Naive thymus-derived CD8-positive, alpha-beta T cell (primary cell): ENCODE measurements at regions of chr19 and their contacts with region 1.

Region 1: GRCh38 chr19:13784731-13785452 is 10.4 kb upstream of the ZSWIM4 start:
- DNase-seq: peak; percentile 50 to 84 (median 68)
- ATAC-seq: peak; percentile 65 to 75
- H3K4me3 Mint-ChIP-seq: peak overlapping the region; percentile 43 to 79 (median 69)
- H3K27ac Mint-ChIP-seq: peak overlapping the region; percentile 71 to 92 (median 85)
- H3K4me1 Mint-ChIP-seq: peaks cover 13 to 43% (median 33%) of the 10 kb centered on the region in 4 donors
- H3K27me3 Mint-ChIP-seq: no peaks in the 10 kb centered on the region

Region 2: DNA sequence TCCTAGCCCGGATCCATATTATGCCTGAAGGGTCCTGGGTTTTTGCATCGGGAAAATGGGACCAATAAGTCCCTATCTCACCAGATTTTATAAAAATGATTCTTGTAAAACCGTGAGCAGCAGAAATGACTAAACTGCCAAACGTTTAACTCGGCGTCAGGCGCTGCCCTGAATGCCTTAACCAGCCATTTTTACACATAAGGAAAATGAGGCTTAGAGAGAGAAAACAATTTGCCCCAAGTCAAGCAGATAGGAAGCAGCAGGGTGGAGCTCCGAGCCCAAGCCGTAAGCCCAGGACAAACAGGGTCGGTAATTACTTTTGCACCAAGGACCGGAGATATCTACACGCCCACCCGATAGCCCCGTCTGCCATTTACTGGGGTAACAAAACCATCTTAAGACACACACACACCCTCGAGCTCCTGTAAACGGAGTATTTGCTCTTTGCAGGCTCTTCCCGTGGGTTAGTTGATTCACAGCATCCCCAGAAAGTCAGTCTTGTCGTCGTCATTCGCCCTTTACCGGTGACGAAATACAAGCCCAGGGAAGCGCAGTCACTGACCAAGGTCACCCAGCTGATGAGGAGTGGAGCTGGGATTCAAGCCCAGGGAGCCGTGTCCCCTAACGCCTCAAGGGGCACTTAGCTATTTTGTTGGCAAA is 36.6 kb before region 1 on chr19:
- POLR2A ChIA-PET with region 1: interaction called, 14 read pairs
- DNase-seq: peak in 1 of 10 donors; percentile 28
- ATAC-seq: peak; percentile 13 to 28
- H3K4me3 Mint-ChIP-seq: peak overlapping the region; percentile 86 to 92 (median 90)
- H3K27ac Mint-ChIP-seq: peak overlapping the region; percentile 84 to 98 (median 94)
- H3K4me1 Mint-ChIP-seq: peaks cover 10 to 44% (median 30%) of the 10 kb centered on the region in 4 donors
- H3K27me3 Mint-ChIP-seq: no peaks in the 10 kb centered on the region

Region 3: GRCh38 chr19:13774217-13775191 is 10.4 kb before region 1 on chr19 and contains the start of gene C19orf53:
- POLR2A ChIA-PET with region 1: interaction called, 21 read pairs
- DNase-seq: peak; percentile 73 to 93 (median 84)
- ATAC-seq: peak; percentile 89 to 91
- H3K4me3 Mint-ChIP-seq: peak within 1 kb of the TSS; percentile 98 to 100 (median 100)
- H3K27ac Mint-ChIP-seq: peak within 1 kb of the TSS; percentile 96 to 100 (median 99)
- H3K4me1 Mint-ChIP-seq: peaks cover 18 to 44% (median 30%) of the 10 kb centered on the region in 4 donors
- H3K27me3 Mint-ChIP-seq: no peaks in the 10 kb centered on the region
- polyA plus RNA-seq, gene C19orf53: 248 to 324 (median 278) TPM

Region 4: DNA sequence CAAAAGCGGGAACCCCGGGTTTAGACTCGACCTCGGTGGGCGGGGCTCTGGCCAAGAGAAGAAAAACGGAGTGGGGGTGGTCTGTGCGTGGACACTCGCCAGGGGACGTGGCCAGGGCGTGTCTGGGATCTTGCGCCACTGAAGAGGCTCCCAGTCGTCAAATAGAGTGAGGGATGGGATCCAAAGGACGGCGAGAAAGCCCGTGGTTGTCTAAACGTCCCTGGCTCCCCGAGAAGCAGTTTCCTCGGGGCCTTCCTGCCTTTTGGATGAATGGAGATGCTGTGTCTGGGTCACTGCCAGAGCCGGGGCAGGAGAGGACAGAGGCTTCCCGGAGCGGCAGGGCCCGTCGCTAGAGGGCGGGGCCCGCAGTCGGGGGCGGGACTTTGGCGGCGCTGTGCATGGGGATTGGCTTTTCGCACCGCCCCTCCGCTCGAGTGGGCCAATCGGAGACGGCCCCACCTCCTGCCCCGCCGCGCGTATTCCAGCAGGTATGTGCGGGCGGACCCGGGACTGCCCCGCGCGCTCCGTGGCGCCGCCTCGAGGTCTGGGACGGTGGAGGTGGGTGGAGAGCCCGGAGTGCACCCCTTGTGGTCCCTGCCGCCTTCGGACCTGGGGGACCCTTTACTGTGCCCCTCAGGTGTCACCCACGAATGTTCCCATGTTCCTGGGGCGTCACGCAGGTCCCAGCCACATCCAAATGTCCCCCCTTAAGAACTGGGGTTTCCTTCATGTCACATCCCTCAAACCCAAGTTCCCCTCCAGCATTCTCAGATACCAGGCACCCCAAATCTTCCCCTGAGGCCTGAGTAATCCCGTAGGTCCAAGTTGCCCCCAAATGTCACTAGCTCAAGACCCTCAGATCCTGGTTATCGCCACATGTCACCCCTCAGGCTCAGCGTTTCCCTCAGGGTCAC is 48.7 kb after region 1 on chr19:
- POLR2A ChIA-PET with region 1: interaction called, 110 read pairs
- DNase-seq: peak; percentile 84 to 95 (median 92)
- ATAC-seq: peak; percentile 69 to 78
- H3K4me3 Mint-ChIP-seq: peak overlapping the region; percentile 82 to 94 (median 88)
- H3K27ac Mint-ChIP-seq: peak overlapping the region; percentile 84 to 99 (median 94)
- H3K4me1 Mint-ChIP-seq: peaks cover 19 to 50% (median 42%) of the 10 kb centered on the region in 4 donors
- H3K27me3 Mint-ChIP-seq: no peaks in the 10 kb centered on the region

Region 5: GRCh38 chr19:13846557-13847406 is 61.9 kb after region 1 on chr19:
- POLR2A ChIA-PET with region 1: interaction called, 110 read pairs
- DNase-seq: peak; percentile 88 to 100 (median 98)
- ATAC-seq: peak; percentile 62 to 75
- H3K4me3 Mint-ChIP-seq: peak overlapping the region; percentile 84 to 94 (median 91)
- H3K27ac Mint-ChIP-seq: peak overlapping the region; percentile 99 to 100 (median 100)
- H3K4me1 Mint-ChIP-seq: peaks cover 26 to 72% (median 56%) of the 10 kb centered on the region in 4 donors
- H3K27me3 Mint-ChIP-seq: peaks cover 0 to 4% (median 0%) of the 10 kb centered on the region in 5 donors

Region 6: DNA sequence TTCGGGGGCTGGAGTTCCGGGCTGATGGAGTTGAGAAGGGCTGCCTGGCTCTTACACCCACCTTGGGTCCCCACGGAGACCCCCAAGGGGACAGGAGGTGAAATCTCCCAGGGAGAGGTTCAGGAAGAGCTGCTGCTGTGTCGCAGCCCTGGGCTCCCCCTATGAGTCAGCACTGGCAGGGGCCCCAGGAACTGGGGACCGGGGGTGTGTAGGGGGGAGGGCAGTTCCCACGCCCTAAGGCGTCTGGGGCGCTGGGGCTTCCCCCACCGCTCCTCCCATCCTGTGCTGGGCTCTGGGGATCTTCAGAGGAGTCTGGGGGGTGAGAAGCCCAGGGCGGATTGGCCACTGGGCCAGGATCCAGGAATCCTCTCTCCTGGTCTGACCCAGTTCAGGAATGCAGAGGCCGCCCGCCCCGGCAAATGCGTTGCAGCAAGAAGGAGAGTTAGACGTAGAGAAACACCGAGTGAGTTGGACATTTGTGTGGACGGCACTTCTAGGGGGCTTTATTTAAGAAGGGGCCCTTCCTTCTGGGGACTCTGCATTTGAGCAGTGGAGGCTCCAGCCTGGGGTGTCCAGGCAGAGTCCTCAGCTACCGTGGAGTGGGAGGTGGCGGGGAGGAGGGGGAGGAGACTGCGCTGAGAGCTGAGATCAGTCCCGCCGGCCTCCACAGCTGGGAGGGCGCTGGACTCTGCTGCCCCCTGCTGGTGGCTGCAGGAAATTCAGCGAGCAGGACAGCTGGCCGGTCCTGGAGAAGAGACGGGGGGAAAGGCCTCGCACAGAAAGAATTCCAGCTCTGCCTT is 77.0 kb after region 1 on chr19:
- POLR2A ChIA-PET with region 1: interaction called, 73 read pairs
- DNase-seq: peak; percentile 70 to 91 (median 86)
- ATAC-seq: peak; percentile 81 to 86
- H3K4me3 Mint-ChIP-seq: peak overlapping the region; percentile 87 to 97 (median 92)
- H3K27ac Mint-ChIP-seq: peak overlapping the region; percentile 84 to 99 (median 96)
- H3K4me1 Mint-ChIP-seq: peaks cover 21 to 43% (median 40%) of the 10 kb centered on the region in 4 donors
- H3K27me3 Mint-ChIP-seq: peaks cover 8 to 24% (median 20%) of the 10 kb centered on the region in 5 donors